ENCODE measurements at regions of chr5 and their contacts with region 1.

Region 1: DNA sequence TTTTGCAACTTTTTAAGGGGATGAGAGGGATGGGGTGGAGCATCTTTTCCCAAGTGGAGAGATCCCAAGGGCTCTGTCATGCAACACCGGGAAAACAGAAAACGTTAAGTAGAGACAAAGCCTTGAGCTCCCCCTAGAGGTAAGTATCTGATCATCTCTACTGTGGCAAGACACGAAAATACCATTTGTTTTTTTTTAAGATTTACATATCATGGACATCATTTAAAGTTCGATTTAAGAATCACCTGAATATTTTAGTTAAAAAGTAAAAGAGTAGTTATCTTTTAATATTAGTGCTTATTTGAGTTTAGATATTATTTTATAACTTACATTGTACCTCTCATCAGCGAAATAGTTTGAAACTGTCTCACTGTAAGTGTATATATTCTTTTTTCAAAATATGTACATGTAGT is 200.4 kb downstream of the LRRC70 start:
- DNase-seq: peak; percentile 20
- H3K4me3 ChIP-seq: no peak overlapping the region
- H3K27ac ChIP-seq: no peak overlapping the region
- H3K4me1 ChIP-seq: no peaks in the 10 kb centered on the region
- H3K27me3 ChIP-seq: no peaks in the 10 kb centered on the region
- CTCF ChIP-seq: peak; percentile 58

Region 2: GRCh38 chr5:62214701-62215100 is 564.3 kb before region 1 on chr5:
- intact Hi-C with region 1: loop called (anchors 10 kb)
- DNase-seq: no peak
- H3K4me3 ChIP-seq: no peak overlapping the region
- H3K27ac ChIP-seq: no peak overlapping the region
- H3K4me1 ChIP-seq: no peaks in the 10 kb centered on the region
- H3K27me3 ChIP-seq: no peaks in the 10 kb centered on the region
- CTCF ChIP-seq: no peak

Region 3: GRCh38 chr5:62460578-62460983 is 318.4 kb before region 1 on chr5:
- intact Hi-C with region 1: loop called (anchors 5 kb)
- DNase-seq: no peak
- H3K4me3 ChIP-seq: no peak overlapping the region
- H3K27ac ChIP-seq: no peak overlapping the region
- H3K4me1 ChIP-seq: no peaks in the 10 kb centered on the region
- H3K27me3 ChIP-seq: no peaks in the 10 kb centered on the region
- CTCF ChIP-seq: peak; percentile 77

Measured in colonic mucosa (tissue), 4 donors.